GM13976 (cell line): ENCODE measurements at regions of chr5 and their contacts with region 1.

Region 1: DNA sequence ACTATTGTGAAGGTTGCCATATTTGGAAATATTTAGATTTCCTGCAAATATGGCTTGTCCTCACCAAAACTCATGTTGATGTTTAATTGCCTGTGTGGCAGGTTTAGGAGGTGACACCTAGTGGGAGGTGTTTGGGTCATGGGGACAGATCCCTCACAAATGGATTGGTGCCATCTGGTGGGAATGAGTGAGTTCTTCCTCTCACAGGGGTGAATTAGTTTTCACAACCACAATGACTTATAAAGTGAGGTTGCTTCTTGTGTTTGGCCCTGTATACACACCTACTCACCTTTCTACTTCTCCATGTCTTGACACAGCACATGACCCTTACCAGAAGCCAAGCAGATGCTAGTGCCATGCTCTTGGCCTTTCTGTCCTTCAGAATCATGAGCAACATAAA is 41.1 kb downstream of the ISOC1 start:
- DNase-seq: no peak
- CTCF ChIP-seq: no peak

Region 2: GRCh38 chr5:128881502-128882008 is 254.1 kb before region 1 on chr5:
- in situ Hi-C with region 1: no loop called
- DNase-seq: no peak
- CTCF ChIP-seq: no peak

Region 3: GRCh38 chr5:128905571-128906110 is 230.0 kb before region 1 on chr5:
- in situ Hi-C with region 1: loop called (anchors 25 kb)
- DNase-seq: peak; percentile 25
- CTCF ChIP-seq: peak; percentile 67